ENCODE measurements at regions of chr3 and their contacts with region 1.

Region 1: DNA sequence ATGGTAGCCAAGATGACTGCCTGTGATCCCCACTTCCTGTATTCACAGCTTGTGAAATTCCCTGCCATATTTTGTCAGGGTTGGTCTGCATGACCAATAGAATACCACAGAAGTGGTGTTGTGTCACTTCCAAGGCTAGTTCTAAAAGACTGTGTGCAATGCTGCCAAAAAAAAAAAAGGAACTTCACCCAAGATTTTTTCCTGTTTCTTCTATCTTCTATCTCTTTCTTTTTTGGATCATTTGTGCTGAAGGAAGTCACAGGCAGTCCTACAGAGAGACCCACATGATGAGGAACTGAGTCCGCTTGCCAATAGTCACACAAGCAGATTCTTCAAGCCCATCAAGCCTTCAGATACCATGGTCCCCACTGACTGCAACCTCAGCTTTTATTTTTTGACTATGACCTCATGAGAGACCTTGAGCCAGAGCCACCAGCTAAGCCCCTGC is 18.1 kb upstream of the RAF1 start:
- DNase-seq: peak in 1 of 2 experiments; percentile 57
- H3K4me3 ChIP-seq: no peak overlapping the region
- H3K27ac ChIP-seq: no peak overlapping the region
- H3K4me1 ChIP-seq: peaks cover 17% of the 10 kb centered on the region
- H3K27me3 ChIP-seq: no peaks in the 10 kb centered on the region
- CTCF ChIP-seq: no peak

Region 2: GRCh38 chr3:12527757-12528143 is 154.2 kb before region 1 on chr3:
- CTCF ChIA-PET with region 1: no interaction called
- POLR2A ChIA-PET with region 1: interaction called, 13 read pairs
- intact Hi-C with region 1: no loop called
- DNase-seq: no peak
- H3K4me3 ChIP-seq: no peak overlapping the region
- H3K27ac ChIP-seq: no peak overlapping the region
- H3K4me1 ChIP-seq: no peaks in the 10 kb centered on the region
- H3K27me3 ChIP-seq: no peaks in the 10 kb centered on the region
- CTCF ChIP-seq: no peak

Region 3: GRCh38 chr3:12648384-12648959 is 33.5 kb before region 1 on chr3:
- CTCF ChIA-PET with region 1: no interaction called
- POLR2A ChIA-PET with region 1: no interaction called
- intact Hi-C with region 1: no loop called
- DNase-seq: no peak
- H3K4me3 ChIP-seq: no peak overlapping the region
- H3K27ac ChIP-seq: peak overlapping the region; percentile 62
- H3K4me1 ChIP-seq: peaks cover 18% of the 10 kb centered on the region
- H3K27me3 ChIP-seq: no peaks in the 10 kb centered on the region
- CTCF ChIP-seq: no peak